CD4-positive, alpha-beta T cell (primary cell): ENCODE measurements at regions of chr5 and their contacts with region 1.

Region 1: GRCh38 chr5:75511435-75512384 is at the starts of genes CERT1 and POLK:
- DNase-seq: peak; percentile 83 to 98 (median 90)
- ATAC-seq: peak; percentile 88
- H3K4me3 ChIP-seq: peak within 1 kb of the TSS; percentile 92
- H3K4me3 Mint-ChIP-seq: peak within 1 kb of the TSS; percentile 96
- H3K27ac ChIP-seq: peak within 1 kb of the TSS; percentile 78
- H3K27ac Mint-ChIP-seq: peak within 1 kb of the TSS; percentile 99
- H3K4me1 ChIP-seq: peaks cover 17% of the 10 kb centered on the region
- H3K4me1 Mint-ChIP-seq: peaks cover 65% of the 10 kb centered on the region
- H3K27me3 ChIP-seq: no peaks in the 10 kb centered on the region
- H3K27me3 Mint-ChIP-seq: no peaks in the 10 kb centered on the region
- CTCF ChIP-seq: no peak
- total RNA-seq, gene CERT1: 26.5 to 28.7 TPM
- total RNA-seq, gene POLK: 10.0 to 10.3 TPM

Region 2: DNA sequence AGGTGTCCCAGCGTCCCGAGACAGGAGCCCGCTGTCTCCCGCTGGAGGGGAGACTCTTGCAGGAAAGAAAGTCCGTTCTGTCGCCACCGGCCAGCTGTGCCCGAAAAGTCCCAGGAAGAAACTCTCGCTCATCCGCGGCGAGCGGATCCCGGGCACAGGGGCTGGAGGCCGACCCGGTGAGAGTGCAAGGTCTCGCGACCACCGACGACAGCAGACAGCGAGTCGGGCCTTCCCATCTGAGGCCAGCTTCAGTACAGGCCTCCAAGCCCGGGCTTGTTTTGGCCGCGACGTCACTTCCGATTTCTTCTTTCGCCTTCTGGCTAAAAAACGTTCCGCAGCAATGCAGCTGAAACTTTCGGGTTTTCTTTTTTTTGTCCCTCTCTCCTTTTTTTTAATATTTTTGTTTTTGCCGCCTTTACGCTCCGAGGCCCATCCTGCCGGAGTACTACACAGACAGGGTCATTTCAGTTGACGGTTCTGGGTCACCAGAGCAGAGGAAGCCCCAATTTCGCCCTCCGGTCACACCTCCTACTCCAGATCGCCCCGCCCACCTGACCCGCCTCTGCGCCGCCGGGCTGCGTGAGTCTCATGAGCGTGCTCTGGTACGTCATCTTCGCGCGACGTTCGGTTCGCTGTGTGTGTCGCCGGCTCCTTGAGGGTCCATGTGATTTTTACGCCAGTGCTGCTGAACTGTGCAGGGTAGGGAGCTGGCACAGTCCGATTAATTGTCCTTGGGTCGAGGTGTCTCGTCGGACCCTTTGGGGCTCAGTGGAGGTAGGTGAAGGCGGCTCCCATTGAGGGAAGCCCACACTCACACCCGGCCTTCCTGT is 1946.4 kb before region 1 on chr5 and contains the starts of genes ANKRA2 and UTP15:
- CTCF ChIA-PET with region 1: no interaction called
- POLR2A ChIA-PET with region 1: no interaction called
- intact Hi-C with region 1: loop called in 1 of 2 experiments (anchors 10 kb)
- DNase-seq: peak; percentile 96 to 100 (median 98)
- ATAC-seq: peak; percentile 92
- H3K4me3 ChIP-seq: peak within 1 kb of the TSS; percentile 81
- H3K4me3 Mint-ChIP-seq: peak within 1 kb of the TSS; percentile 93
- H3K27ac ChIP-seq: peak within 1 kb of the TSS; percentile 90 to 94
- H3K27ac Mint-ChIP-seq: peak within 1 kb of the TSS; percentile 95
- H3K4me1 ChIP-seq: peaks cover 14% of the 10 kb centered on the region
- H3K4me1 Mint-ChIP-seq: peaks cover 63% of the 10 kb centered on the region
- H3K27me3 ChIP-seq: no peaks in the 10 kb centered on the region
- H3K27me3 Mint-ChIP-seq: no peaks in the 10 kb centered on the region
- CTCF ChIP-seq: no peak
- total RNA-seq, gene ANKRA2: 45.0 to 45.1 TPM
- total RNA-seq, gene UTP15: 52.0 to 55.2 TPM

Region 3: DNA sequence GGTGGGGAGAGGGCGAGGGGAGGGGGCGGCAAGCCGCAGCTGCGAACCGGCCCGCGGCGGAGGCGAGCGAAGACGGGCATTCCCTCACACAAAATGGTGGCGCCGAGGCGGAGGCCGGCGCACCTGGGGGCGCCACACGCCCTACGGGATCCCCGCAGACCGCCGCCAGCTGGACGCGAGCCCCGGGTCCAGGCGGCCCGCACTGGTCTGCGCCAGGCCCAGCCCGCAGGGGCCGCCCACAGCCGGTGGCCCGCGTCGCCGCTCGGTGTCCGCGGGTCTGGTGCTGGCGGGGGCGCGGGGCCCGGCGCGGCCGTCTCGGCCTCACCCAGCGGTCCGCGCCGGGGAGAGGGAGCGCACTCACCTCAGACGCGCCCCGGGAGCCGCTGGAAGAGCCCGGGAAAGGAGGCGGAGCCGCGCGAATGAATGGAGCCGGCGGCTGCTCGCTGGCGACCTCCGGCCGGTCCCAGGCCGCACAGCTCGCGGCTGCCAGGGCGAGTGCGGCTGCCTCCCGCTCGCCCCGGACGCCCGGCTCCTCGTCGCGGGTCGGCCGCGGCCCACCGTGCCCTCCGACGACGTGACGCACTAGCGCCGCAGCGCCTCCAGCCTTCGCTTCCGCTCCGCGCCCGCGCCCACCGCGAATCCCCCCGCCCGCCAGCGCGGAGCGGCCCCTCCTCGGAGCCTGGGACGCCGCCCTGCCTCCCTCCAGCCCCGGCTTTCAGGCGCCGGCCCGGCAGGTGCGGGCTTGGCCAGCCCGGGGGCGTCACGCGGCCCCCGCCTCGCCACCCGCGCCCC is 645.7 kb before region 1 on chr5 and contains the start of gene FAM169A:
- CTCF ChIA-PET with region 1: no interaction called
- POLR2A ChIA-PET with region 1: no interaction called
- intact Hi-C with region 1: loop called in 1 of 2 experiments (anchors 5 kb)
- DNase-seq: peak; percentile 25 to 75 (median 47)
- ATAC-seq: peak; percentile 73
- H3K4me3 ChIP-seq: peak within 1 kb of the TSS; percentile 71
- H3K4me3 Mint-ChIP-seq: peak within 1 kb of the TSS; percentile 94
- H3K27ac ChIP-seq: no peak within 1 kb of the TSS
- H3K27ac Mint-ChIP-seq: peak within 1 kb of the TSS; percentile 89
- H3K4me1 ChIP-seq: peaks cover 15% of the 10 kb centered on the region
- H3K4me1 Mint-ChIP-seq: peaks cover 51% of the 10 kb centered on the region
- H3K27me3 ChIP-seq: peaks cover 0 to 7% of the 10 kb centered on the region in 2 experiments
- H3K27me3 Mint-ChIP-seq: peaks cover 5% of the 10 kb centered on the region
- CTCF ChIP-seq: no peak
- total RNA-seq, gene FAM169A: 13.3 to 14.7 TPM

Region 4: GRCh38 chr5:75336625-75337339 is 174.9 kb before region 1 on chr5 and contains the start of gene HMGCR:
- CTCF ChIA-PET with region 1: no interaction called
- POLR2A ChIA-PET with region 1: interaction called, 11 read pairs
- intact Hi-C with region 1: loop called in 1 of 2 experiments (anchors 2 kb)
- DNase-seq: peak; percentile 91 to 99 (median 95)
- ATAC-seq: peak; percentile 90
- H3K4me3 ChIP-seq: peak within 1 kb of the TSS; percentile 82
- H3K4me3 Mint-ChIP-seq: no peak within 1 kb of the TSS
- H3K27ac ChIP-seq: peak within 1 kb of the TSS; percentile 64 to 88
- H3K27ac Mint-ChIP-seq: no peak within 1 kb of the TSS
- H3K4me1 ChIP-seq: peaks cover 5% of the 10 kb centered on the region
- H3K4me1 Mint-ChIP-seq: peaks cover 38% of the 10 kb centered on the region
- H3K27me3 ChIP-seq: no peaks in the 10 kb centered on the region
- H3K27me3 Mint-ChIP-seq: no peaks in the 10 kb centered on the region
- CTCF ChIP-seq: no peak
- total RNA-seq, gene HMGCR: 55.5 to 61.5 TPM

Region 5: DNA sequence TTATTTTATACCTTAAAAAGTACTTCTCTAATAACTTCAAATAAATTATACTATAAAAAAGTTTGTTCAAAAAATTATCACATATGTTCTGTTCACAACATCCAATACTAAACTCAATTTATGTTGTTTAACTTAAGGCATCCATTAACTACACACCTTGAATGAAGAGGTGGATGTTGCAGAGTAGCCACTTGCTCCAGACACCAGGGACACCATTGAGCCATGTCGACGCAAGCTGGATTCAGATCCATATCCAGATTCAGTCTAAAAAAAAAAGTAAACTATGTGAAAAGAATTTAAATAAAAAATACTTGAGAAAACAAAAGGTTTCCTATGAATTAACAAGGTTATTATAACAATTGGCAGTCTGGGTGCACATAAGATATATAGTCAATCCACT is 85.5 kb before region 1 on chr5:
- CTCF ChIA-PET with region 1: no interaction called
- POLR2A ChIA-PET with region 1: no interaction called
- intact Hi-C with region 1: no loop called
- DNase-seq: no peak
- ATAC-seq: no peak
- H3K4me3 ChIP-seq: no peak overlapping the region
- H3K4me3 Mint-ChIP-seq: no peak overlapping the region
- H3K27ac ChIP-seq: no peak overlapping the region
- H3K27ac Mint-ChIP-seq: no peak overlapping the region
- H3K4me1 ChIP-seq: no peaks in the 10 kb centered on the region
- H3K4me1 Mint-ChIP-seq: no peaks in the 10 kb centered on the region
- H3K27me3 ChIP-seq: no peaks in the 10 kb centered on the region
- H3K27me3 Mint-ChIP-seq: no peaks in the 10 kb centered on the region
- CTCF ChIP-seq: no peak

Region 6: DNA sequence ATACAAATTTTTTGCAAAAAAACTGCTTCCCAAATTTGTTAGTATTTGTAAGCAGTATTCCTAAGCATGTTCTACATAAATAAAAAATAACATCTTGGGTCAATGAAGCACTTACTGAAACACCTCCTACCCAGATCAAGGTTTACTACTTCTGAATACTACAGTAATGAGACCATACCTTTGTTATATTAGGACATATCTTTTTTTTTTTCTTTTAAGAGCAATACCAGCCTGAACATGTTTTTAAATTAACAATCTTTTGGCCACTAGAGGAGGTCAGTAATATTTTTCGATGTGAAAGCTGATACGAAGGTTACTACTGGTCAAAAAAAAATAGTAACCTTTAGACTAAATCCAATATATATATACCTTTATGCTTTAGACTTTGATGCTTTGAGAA is 73.0 kb before region 1 on chr5:
- CTCF ChIA-PET with region 1: no interaction called
- POLR2A ChIA-PET with region 1: no interaction called
- intact Hi-C with region 1: no loop called
- DNase-seq: no peak
- ATAC-seq: no peak
- H3K4me3 ChIP-seq: no peak overlapping the region
- H3K4me3 Mint-ChIP-seq: no peak overlapping the region
- H3K27ac ChIP-seq: no peak overlapping the region
- H3K27ac Mint-ChIP-seq: no peak overlapping the region
- H3K4me1 ChIP-seq: no peaks in the 10 kb centered on the region
- H3K4me1 Mint-ChIP-seq: peaks cover 9% of the 10 kb centered on the region
- H3K27me3 ChIP-seq: no peaks in the 10 kb centered on the region
- H3K27me3 Mint-ChIP-seq: no peaks in the 10 kb centered on the region
- CTCF ChIP-seq: no peak

Region 7: GRCh38 chr5:75717082-75717922 is 205.6 kb after region 1 on chr5 and contains the start of gene POC5:
- CTCF ChIA-PET with region 1: no interaction called
- POLR2A ChIA-PET with region 1: no interaction called
- intact Hi-C with region 1: loop called in 1 of 2 experiments (anchors 1 kb)
- DNase-seq: peak; percentile 96 to 99 (median 98)
- ATAC-seq: peak; percentile 92
- H3K4me3 ChIP-seq: peak within 1 kb of the TSS; percentile 79
- H3K4me3 Mint-ChIP-seq: peak within 1 kb of the TSS; percentile 100
- H3K27ac ChIP-seq: peak within 1 kb of the TSS; percentile 71 to 82
- H3K27ac Mint-ChIP-seq: peak within 1 kb of the TSS; percentile 93
- H3K4me1 ChIP-seq: peaks cover 13% of the 10 kb centered on the region
- H3K4me1 Mint-ChIP-seq: peaks cover 42% of the 10 kb centered on the region
- H3K27me3 ChIP-seq: no peaks in the 10 kb centered on the region
- H3K27me3 Mint-ChIP-seq: no peaks in the 10 kb centered on the region
- CTCF ChIP-seq: no peak
- total RNA-seq, gene POC5: 5.7 to 6.2 TPM